Left cardiac atrium (tissue), 4 donors: ENCODE measurements at regions of chr20 and their contacts with region 1.

Region 1: DNA sequence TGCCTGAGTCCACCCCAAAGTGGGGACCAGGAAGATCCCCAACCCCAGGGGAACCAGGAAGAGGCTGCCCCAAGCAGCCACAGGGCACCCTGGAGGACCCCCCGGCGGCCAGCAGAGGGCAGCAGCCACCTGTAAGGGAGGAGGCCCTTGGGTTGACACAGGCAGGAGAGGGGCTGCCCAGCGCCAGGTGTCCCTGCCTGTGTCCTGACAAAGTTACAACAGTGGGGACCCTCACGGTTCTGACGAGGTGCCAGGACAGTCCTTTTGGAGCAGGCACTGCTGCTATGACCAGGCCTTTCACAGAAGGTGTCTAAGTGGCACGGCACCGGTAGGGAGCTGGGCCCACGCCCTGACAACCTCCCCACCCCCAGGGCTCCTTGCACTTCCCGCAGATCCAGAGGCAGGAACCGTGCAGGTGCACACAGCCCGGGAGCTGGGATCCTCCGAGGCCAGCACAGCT is 176.7 kb downstream of the BMP7 start:
- DNase-seq: peak; percentile 68
- ATAC-seq: peak; percentile 83 to 87

Region 2: GRCh38 chr20:57148263-57148662 is 58.5 kb after region 1 on chr20:
- intact Hi-C with region 1: no loop called
- DNase-seq: peak; percentile 50
- ATAC-seq: peak; percentile 41 to 90

Region 3: GRCh38 chr20:57263801-57264792 is 174.4 kb after region 1 on chr20:
- intact Hi-C with region 1: loop called in 1 of 2 experiments (anchors 5 kb)
- DNase-seq: no peak
- ATAC-seq: no peak

Region 4: DNA sequence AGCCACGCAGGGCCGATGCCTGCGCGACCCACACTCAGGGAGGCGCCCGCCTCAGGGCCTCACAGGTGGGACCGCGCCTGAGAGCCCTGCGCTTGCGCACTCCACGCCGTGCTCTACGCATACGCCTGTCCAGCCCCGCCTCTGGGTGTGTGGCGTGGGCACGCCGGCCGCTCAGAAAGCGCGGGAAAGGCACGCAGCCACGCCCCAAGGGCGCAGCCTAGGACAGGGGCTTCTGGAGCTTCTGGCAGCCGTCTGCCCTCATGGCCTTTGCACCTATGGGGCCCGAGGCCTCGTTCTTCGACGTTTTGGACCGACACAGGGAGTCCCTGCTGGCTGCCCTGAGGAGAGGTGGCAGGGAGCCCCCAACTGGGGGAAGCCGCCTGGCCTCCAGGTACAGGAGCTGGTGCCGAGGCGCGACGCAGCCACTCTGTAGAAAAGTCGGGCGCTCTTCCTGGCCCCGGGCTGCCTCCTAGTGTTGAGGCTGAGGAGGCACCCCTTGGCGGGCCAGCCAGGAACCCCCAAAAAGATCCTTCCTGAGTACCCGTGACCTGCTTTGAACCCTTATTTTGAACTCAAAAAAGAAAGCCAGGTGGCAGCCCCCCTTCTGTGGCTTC is 240.0 kb after region 1 on chr20 and contains the start of gene SPO11:
- intact Hi-C with region 1: loop called (anchors 5 kb)
- DNase-seq: no peak
- ATAC-seq: peak in 1 of 2 donors; percentile 44
- total RNA-seq, gene SPO11: not detected

Region 5: DNA sequence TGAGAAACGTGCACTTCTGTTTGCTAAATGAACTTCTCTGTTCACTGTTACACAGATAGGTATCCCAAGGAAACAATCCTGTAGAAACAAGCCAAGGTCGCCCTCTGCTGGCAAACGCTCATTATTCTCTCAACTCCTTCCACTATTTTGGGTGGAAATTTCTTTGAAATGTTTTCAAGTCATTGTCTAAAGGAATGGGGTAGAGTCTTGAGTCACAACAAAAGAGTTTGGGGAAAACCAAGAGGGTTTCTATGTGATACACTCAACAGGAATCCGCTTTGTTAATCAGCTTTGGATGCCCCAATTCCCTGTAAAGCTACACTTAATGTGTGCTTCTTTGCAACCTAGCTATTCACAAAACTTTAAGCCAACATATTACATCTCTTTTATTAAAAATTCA is 256.8 kb after region 1 on chr20:
- intact Hi-C with region 1: loop called (anchors 1 to 5 kb)
- DNase-seq: peak; percentile 78
- ATAC-seq: peak; percentile 45 to 58